Activated CD8-positive, alpha-beta T cell treated with anti-CD3 and anti-CD28 coated beads for 36 hours (primary cell): ENCODE measurements at regions of chr7 and their contacts with region 1.

Region 1: DNA sequence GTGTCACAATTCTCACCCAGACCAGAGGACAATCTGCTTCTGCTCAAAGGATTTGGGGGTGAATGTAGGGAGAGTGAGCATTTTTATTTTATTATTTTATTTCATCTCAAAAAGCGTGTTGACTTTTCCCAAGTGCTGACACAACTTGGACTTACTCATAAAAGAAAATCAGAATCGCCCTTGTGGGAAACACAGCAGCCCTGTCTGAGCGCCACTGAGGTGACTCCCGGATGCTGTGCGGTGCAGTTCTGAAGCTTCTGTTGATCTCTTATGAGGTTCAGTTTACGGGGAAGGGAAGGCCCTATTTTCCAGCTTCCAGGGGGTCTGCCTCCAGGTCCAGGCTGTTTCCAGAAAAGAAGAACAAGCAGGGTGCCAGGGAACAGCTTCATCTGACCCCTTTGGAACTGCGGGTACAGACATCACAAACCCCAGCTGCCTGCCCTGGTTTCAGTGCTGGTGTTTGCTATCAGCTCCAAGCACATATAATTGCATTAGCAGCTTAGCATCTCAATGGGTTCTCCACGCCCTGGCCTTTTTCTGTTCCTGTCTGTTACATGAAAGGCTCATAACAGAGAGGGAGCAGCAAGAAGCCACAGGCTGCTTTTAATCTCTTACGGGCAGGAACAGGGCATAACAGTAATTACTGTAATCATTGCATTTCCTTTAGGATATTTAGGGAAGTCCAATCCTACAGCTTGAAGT is 52.4 kb downstream of the PARP12 start:
- DNase-seq: no peak
- ATAC-seq: no peak
- H3K4me3 Mint-ChIP-seq: no peak overlapping the region
- H3K27ac Mint-ChIP-seq: no peak overlapping the region
- H3K4me1 Mint-ChIP-seq: no peaks in the 10 kb centered on the region
- H3K27me3 Mint-ChIP-seq: no peaks in the 10 kb centered on the region
- CTCF ChIP-seq: no peak

Region 2: GRCh38 chr7:139958599-139959297 is 51.6 kb before region 1 on chr7:
- CTCF ChIA-PET with region 1: no interaction called
- POLR2A ChIA-PET with region 1: no interaction called
- intact Hi-C with region 1: loop called (anchors 10 kb)
- DNase-seq: no peak
- ATAC-seq: no peak
- H3K4me3 Mint-ChIP-seq: no peak overlapping the region
- H3K27ac Mint-ChIP-seq: no peak overlapping the region
- H3K4me1 Mint-ChIP-seq: no peaks in the 10 kb centered on the region
- H3K27me3 Mint-ChIP-seq: no peaks in the 10 kb centered on the region
- CTCF ChIP-seq: no peak